ENCODE measurements at regions of chr11 and their contacts with region 1.

Region 1: GRCh38 chr11:36672813-36673450 is 74.9 kb upstream of the RAG2 start:
- DNase-seq: no peak
- H3K4me3 ChIP-seq: no peak overlapping the region
- H3K27ac ChIP-seq: no peak overlapping the region
- H3K4me1 ChIP-seq: no peaks in the 10 kb centered on the region
- H3K27me3 ChIP-seq: no peaks in the 10 kb centered on the region
- CTCF ChIP-seq: peak; percentile 98

Region 2: GRCh38 chr11:36564376-36565030 is 108.4 kb before region 1 on chr11:
- CTCF ChIA-PET with region 1: interaction called, 4 read pairs
- POLR2A ChIA-PET with region 1: no interaction called
- intact Hi-C with region 1: loop called (anchors 1 kb)
- DNase-seq: peak in 1 of 2 experiments; percentile 24
- H3K4me3 ChIP-seq: no peak overlapping the region
- H3K27ac ChIP-seq: no peak overlapping the region
- H3K4me1 ChIP-seq: no peaks in the 10 kb centered on the region
- H3K27me3 ChIP-seq: no peaks in the 10 kb centered on the region
- CTCF ChIP-seq: peak; percentile 68